ENCODE measurements at regions of chr1 and their contacts with region 1.

Region 1: GRCh38 chr1:20507564-20508410 is at the start of gene MUL1:
- DNase-seq: peak; percentile 85 to 97 (median 95)
- ATAC-seq: peak; percentile 83
- H3K4me3 ChIP-seq: peak within 1 kb of the TSS; percentile 78 to 99
- H3K4me3 Mint-ChIP-seq: peak within 1 kb of the TSS; percentile 87
- H3K27ac ChIP-seq: peak within 1 kb of the TSS; percentile 91 to 99
- H3K27ac Mint-ChIP-seq: peak within 1 kb of the TSS; percentile 97
- H3K4me1 ChIP-seq: peaks cover 32% of the 10 kb centered on the region
- H3K4me1 Mint-ChIP-seq: peaks cover 28% of the 10 kb centered on the region
- H3K27me3 ChIP-seq: peaks cover 0 to 2% of the 10 kb centered on the region in 2 experiments
- H3K27me3 Mint-ChIP-seq: peaks cover 6% of the 10 kb centered on the region
- CTCF ChIP-seq: no peak
- total RNA-seq, gene MUL1: 19.7 to 22.5 TPM

Region 2: GRCh38 chr1:19209990-19210771 is 1297.6 kb before region 1 on chr1 and contains the start of gene UBR4:
- CTCF ChIA-PET with region 1: no interaction called
- POLR2A ChIA-PET with region 1: no interaction called
- intact Hi-C with region 1: loop called in 1 of 2 experiments (anchors 2 kb)
- DNase-seq: peak; percentile 91 to 99 (median 97)
- ATAC-seq: peak; percentile 93
- H3K4me3 ChIP-seq: peak within 1 kb of the TSS; percentile 73 to 96
- H3K4me3 Mint-ChIP-seq: peak within 1 kb of the TSS; percentile 96
- H3K27ac ChIP-seq: peak within 1 kb of the TSS; percentile 86 to 96
- H3K27ac Mint-ChIP-seq: peak within 1 kb of the TSS; percentile 99
- H3K4me1 ChIP-seq: peaks cover 48% of the 10 kb centered on the region
- H3K4me1 Mint-ChIP-seq: peaks cover 76% of the 10 kb centered on the region
- H3K27me3 ChIP-seq: no peaks in the 10 kb centered on the region
- H3K27me3 Mint-ChIP-seq: no peaks in the 10 kb centered on the region
- CTCF ChIP-seq: no peak
- total RNA-seq, gene UBR4: 146 to 148 TPM

Region 3: GRCh38 chr1:20470194-20470593 is 37.6 kb before region 1 on chr1:
- CTCF ChIA-PET with region 1: no interaction called
- POLR2A ChIA-PET with region 1: no interaction called
- intact Hi-C with region 1: no loop called
- DNase-seq: no peak
- ATAC-seq: no peak
- H3K4me3 ChIP-seq: no peak overlapping the region
- H3K4me3 Mint-ChIP-seq: no peak overlapping the region
- H3K27ac ChIP-seq: no peak overlapping the region
- H3K27ac Mint-ChIP-seq: no peak overlapping the region
- H3K4me1 ChIP-seq: no peaks in the 10 kb centered on the region
- H3K4me1 Mint-ChIP-seq: peaks cover 2% of the 10 kb centered on the region
- H3K27me3 ChIP-seq: peaks cover 4 to 9% of the 10 kb centered on the region in 2 experiments
- H3K27me3 Mint-ChIP-seq: peaks cover 57% of the 10 kb centered on the region
- CTCF ChIP-seq: no peak

Region 4: GRCh38 chr1:20493839-20494608 is 13.8 kb before region 1 on chr1:
- CTCF ChIA-PET with region 1: interaction called, 35 read pairs
- POLR2A ChIA-PET with region 1: interaction called, 3 read pairs
- intact Hi-C with region 1: no loop called
- DNase-seq: peak; percentile 66 to 92 (median 83)
- ATAC-seq: peak; percentile 90
- H3K4me3 ChIP-seq: no peak overlapping the region
- H3K4me3 Mint-ChIP-seq: no peak overlapping the region
- H3K27ac ChIP-seq: no peak overlapping the region
- H3K27ac Mint-ChIP-seq: no peak overlapping the region
- H3K4me1 ChIP-seq: peaks cover 7% of the 10 kb centered on the region
- H3K4me1 Mint-ChIP-seq: peaks cover 3% of the 10 kb centered on the region
- H3K27me3 ChIP-seq: no peaks in the 10 kb centered on the region
- H3K27me3 Mint-ChIP-seq: no peaks in the 10 kb centered on the region
- CTCF ChIP-seq: peak; percentile 87

Region 5: DNA sequence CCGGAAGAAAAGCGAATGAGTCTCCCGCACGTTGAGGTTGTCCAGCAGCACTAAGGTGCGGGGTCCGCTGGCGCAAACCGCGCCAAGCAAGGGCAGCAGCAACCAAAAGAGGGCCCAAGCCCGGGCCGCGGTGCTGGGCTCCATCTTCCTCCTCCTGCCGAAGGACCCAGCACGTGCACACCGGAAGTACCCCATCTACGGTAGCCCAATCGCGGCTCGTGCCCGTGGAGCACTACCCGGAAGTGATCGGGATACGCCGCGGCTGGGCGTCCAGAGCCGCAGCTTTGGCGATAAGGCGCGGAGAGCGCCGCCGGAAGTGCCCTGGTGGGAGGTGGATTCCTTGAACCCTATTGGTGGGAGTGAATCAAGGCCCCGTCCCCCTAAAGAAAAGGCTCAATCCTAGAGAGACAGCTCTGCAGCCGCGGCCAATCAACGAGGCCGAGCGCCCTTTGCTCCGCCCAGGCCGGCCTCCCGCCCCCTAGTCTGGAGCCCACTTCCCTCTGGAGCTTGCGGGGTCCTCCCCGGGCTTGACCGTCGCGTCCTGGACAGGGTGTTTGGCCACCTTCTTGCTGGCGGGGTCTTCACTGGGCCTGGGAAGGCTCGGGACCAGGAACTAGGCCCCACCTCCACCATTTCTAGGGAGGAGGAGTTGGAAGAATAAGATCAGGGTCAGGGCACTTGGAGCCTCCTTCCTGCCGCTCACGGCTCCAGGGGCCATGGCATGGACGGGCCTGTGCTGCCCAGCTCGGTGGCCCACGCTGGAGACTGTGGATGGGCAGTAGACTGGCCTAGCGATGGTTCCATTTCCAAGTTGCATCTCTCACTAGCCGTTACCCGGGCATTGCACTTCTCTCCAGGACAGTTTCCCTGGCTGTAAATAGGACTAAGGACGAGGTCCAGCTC is 153.7 kb after region 1 on chr1 and contains the start of gene DDOST:
- CTCF ChIA-PET with region 1: no interaction called
- POLR2A ChIA-PET with region 1: no interaction called
- intact Hi-C with region 1: loop called in 1 of 2 experiments (anchors 1 kb)
- DNase-seq: peak; percentile 86 to 98 (median 94)
- ATAC-seq: peak; percentile 94
- H3K4me3 ChIP-seq: peak within 1 kb of the TSS; percentile 85 to 95
- H3K4me3 Mint-ChIP-seq: peak within 1 kb of the TSS; percentile 98
- H3K27ac ChIP-seq: peak within 1 kb of the TSS; percentile 81 to 87
- H3K27ac Mint-ChIP-seq: peak within 1 kb of the TSS; percentile 98
- H3K4me1 ChIP-seq: peaks cover 28% of the 10 kb centered on the region
- H3K4me1 Mint-ChIP-seq: peaks cover 52% of the 10 kb centered on the region
- H3K27me3 ChIP-seq: no peaks in the 10 kb centered on the region
- H3K27me3 Mint-ChIP-seq: no peaks in the 10 kb centered on the region
- CTCF ChIP-seq: peak; percentile 27
- total RNA-seq, gene DDOST: 97.5 to 114 TPM

Region 6: DNA sequence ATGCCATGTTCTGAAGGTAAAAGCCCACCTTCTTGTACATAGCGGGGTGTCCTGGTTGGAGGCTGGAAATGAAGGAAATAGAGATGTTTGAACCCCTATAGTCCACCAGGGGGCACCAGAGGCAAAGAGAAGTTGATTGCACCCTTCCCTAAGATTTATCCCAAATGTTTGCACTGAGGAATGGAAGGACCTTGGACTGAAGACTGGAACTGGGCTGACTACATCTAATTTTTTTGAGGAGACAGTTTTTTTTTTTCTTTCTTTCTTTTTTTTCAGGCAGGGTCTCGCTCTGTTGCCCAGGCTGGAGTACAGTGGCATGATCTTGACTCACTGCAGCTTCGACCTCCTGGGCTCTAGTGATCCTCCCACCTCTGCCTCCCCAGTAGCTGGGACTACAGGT is 724.3 kb after region 1 on chr1:
- CTCF ChIA-PET with region 1: no interaction called
- POLR2A ChIA-PET with region 1: no interaction called
- intact Hi-C with region 1: no loop called
- DNase-seq: peak in 4 of 9 experiments; percentile 32 to 69 (median 52)
- ATAC-seq: peak; percentile 73
- H3K4me3 ChIP-seq: no peak overlapping the region
- H3K4me3 Mint-ChIP-seq: no peak overlapping the region
- H3K27ac ChIP-seq: no peak overlapping the region
- H3K27ac Mint-ChIP-seq: no peak overlapping the region
- H3K4me1 ChIP-seq: no peaks in the 10 kb centered on the region
- H3K4me1 Mint-ChIP-seq: no peaks in the 10 kb centered on the region
- H3K27me3 ChIP-seq: no peaks in the 10 kb centered on the region
- H3K27me3 Mint-ChIP-seq: no peaks in the 10 kb centered on the region
- CTCF ChIP-seq: peak; percentile 90

Region 7: GRCh38 chr1:21294266-21294989 is 786.6 kb after region 1 on chr1:
- CTCF ChIA-PET with region 1: no interaction called
- POLR2A ChIA-PET with region 1: no interaction called
- intact Hi-C with region 1: loop called in 1 of 2 experiments (anchors 5 kb)
- DNase-seq: peak; percentile 71 to 97 (median 85)
- ATAC-seq: peak; percentile 72
- H3K4me3 ChIP-seq: peak overlapping the region; percentile 44 to 86
- H3K4me3 Mint-ChIP-seq: peak overlapping the region; percentile 86
- H3K27ac ChIP-seq: peak overlapping the region; percentile 91 to 94
- H3K27ac Mint-ChIP-seq: peak overlapping the region; percentile 98
- H3K4me1 ChIP-seq: peaks cover 80% of the 10 kb centered on the region
- H3K4me1 Mint-ChIP-seq: peaks cover 82% of the 10 kb centered on the region
- H3K27me3 ChIP-seq: no peaks in the 10 kb centered on the region
- H3K27me3 Mint-ChIP-seq: no peaks in the 10 kb centered on the region
- CTCF ChIP-seq: no peak

Region 8: GRCh38 chr1:22451702-22452474 is 1944.1 kb after region 1 on chr1 and contains the start of gene ZBTB40:
- CTCF ChIA-PET with region 1: no interaction called
- POLR2A ChIA-PET with region 1: no interaction called
- intact Hi-C with region 1: loop called in 1 of 2 experiments (anchors 5 kb)
- DNase-seq: peak; percentile 83 to 98 (median 93)
- ATAC-seq: peak; percentile 89
- H3K4me3 ChIP-seq: peak within 1 kb of the TSS; percentile 71 to 92
- H3K4me3 Mint-ChIP-seq: peak within 1 kb of the TSS; percentile 93
- H3K27ac ChIP-seq: peak within 1 kb of the TSS; percentile 82 to 93
- H3K27ac Mint-ChIP-seq: peak within 1 kb of the TSS; percentile 93
- H3K4me1 ChIP-seq: peaks cover 18% of the 10 kb centered on the region
- H3K4me1 Mint-ChIP-seq: peaks cover 46% of the 10 kb centered on the region
- H3K27me3 ChIP-seq: no peaks in the 10 kb centered on the region
- H3K27me3 Mint-ChIP-seq: no peaks in the 10 kb centered on the region
- CTCF ChIP-seq: no peak
- total RNA-seq, gene ZBTB40: 20.9 to 21.3 TPM

Measured in CD8-positive, alpha-beta T cell (primary cell).